ENCODE measurements at regions of chr1 and their contacts with region 1.

Region 1: GRCh38 chr1:179816196-179816960 is 61.2 kb downstream of the TOR1AIP2 start:
- DNase-seq: no peak
- ATAC-seq: peak; percentile 44
- H3K4me3 ChIP-seq: no peak overlapping the region
- H3K27ac ChIP-seq: no peak overlapping the region
- H3K4me1 ChIP-seq: peaks cover 11% of the 10 kb centered on the region; the same call in 1 of the 2 replicates
- H3K27me3 ChIP-seq: peaks cover 12% of the 10 kb centered on the region
- CTCF ChIP-seq: no peak

Region 2: DNA sequence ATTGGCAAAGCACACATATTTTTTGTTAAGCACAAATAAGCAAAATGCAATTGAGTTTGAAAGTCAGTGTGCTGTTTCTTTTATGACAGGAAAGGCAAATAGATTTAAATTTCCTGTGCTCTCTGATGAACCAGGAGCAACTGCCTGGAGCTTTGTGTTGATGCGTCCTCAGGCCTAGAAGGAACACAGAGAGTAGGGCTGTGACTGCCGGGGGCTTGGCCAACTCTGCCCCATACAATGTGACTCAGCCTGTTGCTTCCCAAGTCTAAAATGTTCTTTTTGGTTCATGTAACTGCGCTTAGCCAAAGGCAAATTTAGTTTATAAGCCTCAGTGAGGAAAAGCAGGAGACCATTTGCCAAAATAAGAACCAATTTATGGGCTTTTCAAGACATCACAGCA is 23.7 kb after region 1 on chr1:
- CTCF ChIA-PET with region 1: interaction called, 13 read pairs
- POLR2A ChIA-PET with region 1: interaction called, 7 read pairs
- intact Hi-C with region 1: loop called (anchors 1 kb)
- DNase-seq: no peak
- ATAC-seq: peak; percentile 97
- H3K4me3 ChIP-seq: no peak overlapping the region
- H3K27ac ChIP-seq: no peak overlapping the region
- H3K4me1 ChIP-seq: no peaks in the 10 kb centered on the region
- H3K27me3 ChIP-seq: no peaks in the 10 kb centered on the region
- CTCF ChIP-seq: no peak